ENCODE measurements at regions of chr20 and their contacts with region 1.

Region 1: DNA sequence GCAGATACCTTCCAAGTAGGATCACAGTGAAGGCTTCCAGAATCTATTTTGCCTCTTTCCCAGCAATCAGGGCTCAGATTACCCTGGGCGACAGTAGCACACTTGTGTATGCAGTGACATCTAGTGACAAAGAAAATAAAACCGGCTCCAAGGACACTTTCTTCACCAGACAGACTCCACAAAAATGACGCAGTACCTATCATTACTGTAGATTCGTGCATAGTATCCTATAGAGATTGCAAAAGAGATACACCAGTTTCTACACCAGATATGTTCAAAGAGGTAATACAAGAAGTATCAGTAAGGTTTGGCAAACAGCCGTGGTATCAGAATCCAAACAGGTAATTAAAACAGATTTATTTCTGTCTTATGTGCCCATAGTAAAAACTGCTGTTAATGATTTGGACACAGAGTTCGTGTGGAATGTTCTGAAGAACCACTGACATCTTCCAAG is 600.4 kb upstream of the JAG1 start:
- DNase-seq: peak in 2 of 6 donors; percentile 23 to 43
- ATAC-seq: peak; percentile 91 to 98 (median 96)
- H3K4me3 ChIP-seq: no peak overlapping the region
- H3K27ac ChIP-seq: no peak overlapping the region
- H3K4me1 ChIP-seq: no peaks in the 10 kb centered on the region
- H3K27me3 ChIP-seq: no peaks in the 10 kb centered on the region
- CTCF ChIP-seq: peak; percentile 7 to 41 (median 26)

Region 2: GRCh38 chr20:10558635-10559187 is 715.5 kb before region 1 on chr20:
- intact Hi-C with region 1: loop called in 1 of 3 experiments (anchors 5 kb)
- DNase-seq: no peak
- ATAC-seq: no peak
- H3K4me3 ChIP-seq: no peak overlapping the region
- H3K27ac ChIP-seq: no peak overlapping the region
- H3K4me1 ChIP-seq: peaks cover 0 to 10% (median 6%) of the 10 kb centered on the region in 3 donors
- H3K27me3 ChIP-seq: no peaks in the 10 kb centered on the region
- CTCF ChIP-seq: no peak